Spleen (tissue), 13 donors: ENCODE measurements at regions of chr10 and their contacts with region 1.

Region 1: DNA sequence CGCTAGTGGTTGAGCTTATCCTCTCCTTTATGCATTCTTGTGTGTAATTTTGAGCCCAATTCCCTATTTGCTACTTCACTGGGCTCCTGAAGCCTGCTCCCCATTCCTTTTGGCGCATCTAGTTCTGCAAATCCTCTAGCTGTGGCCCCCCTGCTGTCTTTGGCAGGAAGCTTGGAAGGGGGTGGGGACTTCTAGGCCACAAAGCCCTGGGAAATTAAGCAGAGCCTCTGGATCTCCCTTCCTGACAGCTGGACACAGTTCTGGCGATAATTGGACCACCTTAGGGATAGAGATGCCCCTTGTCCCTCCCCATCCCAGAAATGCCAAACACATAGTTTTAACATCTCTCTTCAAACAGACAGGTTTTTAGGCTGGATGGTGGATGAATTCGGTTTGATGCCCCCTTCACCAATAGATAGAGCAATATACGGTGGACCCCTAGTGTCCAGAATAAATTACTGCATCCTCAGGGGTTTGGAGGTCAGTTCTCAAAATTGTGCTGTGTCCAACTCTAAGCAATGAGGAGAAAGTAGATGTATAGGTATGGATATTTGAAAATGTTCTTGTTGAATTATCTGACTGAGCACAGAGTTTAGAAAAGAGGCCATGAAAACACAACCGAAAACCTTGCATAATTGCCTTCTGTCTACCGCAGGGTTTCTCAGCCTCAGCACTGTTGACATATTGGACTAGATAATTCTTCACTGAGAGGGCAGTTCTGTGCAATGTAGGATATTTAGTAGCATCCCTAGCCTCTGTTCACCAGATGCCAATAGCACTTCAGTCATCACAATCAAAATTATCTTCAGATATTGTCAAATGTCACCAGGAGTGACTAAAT is 75.5 kb downstream of the PAPSS2 start:
- DNase-seq: no peak
- H3K4me3 ChIP-seq: no peak overlapping the region
- H3K27ac ChIP-seq: peak overlapping the region in 1 of 8 donors; percentile 24
- H3K4me1 ChIP-seq: peaks cover 0 to 16% (median 8%) of the 10 kb centered on the region in 6 donors
- H3K27me3 ChIP-seq: no peaks in the 10 kb centered on the region
- CTCF ChIP-seq: peak; percentile 43 to 78 (median 72)
- POLR2A ChIP-seq: no peak

Region 2: DNA sequence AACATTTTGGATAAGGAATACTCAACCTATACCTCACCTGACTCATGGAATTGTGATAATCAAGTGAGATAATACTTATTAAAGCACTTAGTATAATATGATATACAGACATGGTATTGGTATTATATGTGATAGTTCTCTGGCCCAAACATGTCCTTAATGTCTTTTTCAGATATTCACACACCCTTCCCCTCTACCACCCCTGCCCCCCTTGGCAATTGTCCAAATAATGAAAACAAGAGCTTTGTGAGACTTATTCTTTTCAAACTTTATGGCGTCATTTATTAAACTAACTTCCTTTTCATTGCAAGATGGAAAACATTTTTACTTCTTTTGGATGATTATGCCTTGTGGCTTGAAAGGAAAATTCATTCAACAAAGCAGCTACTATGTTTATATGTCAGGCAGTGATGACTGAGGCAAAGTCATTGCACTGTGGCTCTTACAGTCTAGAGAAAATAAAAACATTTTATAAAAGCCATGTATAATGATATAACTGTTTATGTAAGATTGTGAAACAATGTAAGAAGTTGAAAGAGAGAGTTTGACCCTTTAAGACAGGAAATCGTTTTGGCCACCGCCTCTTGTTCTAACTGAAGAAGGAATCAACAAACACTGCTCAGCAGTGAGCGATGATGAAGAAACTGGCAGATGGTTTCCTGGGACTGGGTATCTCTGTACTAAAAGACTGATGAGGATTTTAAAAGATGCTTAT is 203.1 kb before region 1 on chr10:
- intact Hi-C with region 1: loop called (anchors 10 kb)
- DNase-seq: no peak
- H3K4me3 ChIP-seq: no peak overlapping the region
- H3K27ac ChIP-seq: peak overlapping the region in 6 of 8 donors; percentile 16 to 60 (median 41)
- H3K4me1 ChIP-seq: peaks cover 0 to 20% (median 0%) of the 10 kb centered on the region in 6 donors
- H3K27me3 ChIP-seq: no peaks in the 10 kb centered on the region
- CTCF ChIP-seq: no peak
- POLR2A ChIP-seq: no peak

Region 3: GRCh38 chr10:87659571-87660483 is 75.4 kb before region 1 on chr10 and contains the start of gene PAPSS2:
- intact Hi-C with region 1: loop called (anchors 10 kb)
- DNase-seq: peak; percentile 88
- H3K4me3 ChIP-seq: peak within 1 kb of the TSS; percentile 44 to 80 (median 60)
- H3K27ac ChIP-seq: peak within 1 kb of the TSS; percentile 36 to 83 (median 66)
- H3K4me1 ChIP-seq: peaks cover 0 to 61% (median 21%) of the 10 kb centered on the region in 6 donors
- H3K27me3 ChIP-seq: peaks cover 0 to 30% (median 8%) of the 10 kb centered on the region in 7 donors
- CTCF ChIP-seq: no peak
- POLR2A ChIP-seq: no peak
- total RNA-seq, gene PAPSS2: 11.0 to 25.9 (median 13.0) TPM